T-cell (primary cell): ENCODE measurements at regions of chr10 and their contacts with region 1.

Region 1: DNA sequence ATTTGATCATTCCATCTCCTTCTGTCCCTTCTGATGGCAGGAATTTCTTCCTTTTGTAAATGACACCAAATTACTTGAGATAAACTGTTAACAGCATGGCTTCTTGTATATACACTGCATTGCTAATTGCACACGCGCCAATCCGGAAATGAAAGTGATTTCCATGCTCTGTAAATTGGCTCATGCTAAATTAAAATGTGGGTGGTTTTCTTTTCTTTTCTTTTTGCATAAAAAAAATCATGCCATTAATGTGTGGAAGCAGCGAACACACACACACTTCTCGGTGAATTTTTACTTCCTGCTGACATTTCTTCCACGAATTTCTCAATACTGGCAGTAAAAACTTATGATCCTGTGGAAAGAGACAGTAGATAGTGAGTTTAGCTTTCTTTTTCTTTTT is 123.1 kb upstream of the CCDC6 start:
- DNase-seq: no peak
- ATAC-seq: no peak
- H3K4me3 ChIP-seq: no peak overlapping the region
- H3K4me3 Mint-ChIP-seq: no peak overlapping the region
- H3K27ac ChIP-seq: no peak overlapping the region
- H3K27ac Mint-ChIP-seq: no peak overlapping the region
- H3K4me1 ChIP-seq: no peaks in the 10 kb centered on the region
- H3K4me1 Mint-ChIP-seq: no peaks in the 10 kb centered on the region
- H3K27me3 ChIP-seq: no peaks in the 10 kb centered on the region
- H3K27me3 Mint-ChIP-seq: no peaks in the 10 kb centered on the region

Region 2: GRCh38 chr10:59808896-59809643 is 220.4 kb before region 1 on chr10:
- CTCF ChIA-PET with region 1: no interaction called
- POLR2A ChIA-PET with region 1: interaction called in 1 of 2 experiments, 19 read pairs
- DNase-seq: peak in 34 of 35 experiments; percentile 6 to 57 (median 36)
- ATAC-seq: peak in 3 of 4 experiments; percentile 43 to 63 (median 53)
- H3K4me3 ChIP-seq: no peak overlapping the region
- H3K4me3 Mint-ChIP-seq: no peak overlapping the region
- H3K27ac ChIP-seq: no peak overlapping the region
- H3K27ac Mint-ChIP-seq: no peak overlapping the region
- H3K4me1 ChIP-seq: no peaks in the 10 kb centered on the region
- H3K4me1 Mint-ChIP-seq: no peaks in the 10 kb centered on the region
- H3K27me3 ChIP-seq: no peaks in the 10 kb centered on the region
- H3K27me3 Mint-ChIP-seq: no peaks in the 10 kb centered on the region

Region 3: DNA sequence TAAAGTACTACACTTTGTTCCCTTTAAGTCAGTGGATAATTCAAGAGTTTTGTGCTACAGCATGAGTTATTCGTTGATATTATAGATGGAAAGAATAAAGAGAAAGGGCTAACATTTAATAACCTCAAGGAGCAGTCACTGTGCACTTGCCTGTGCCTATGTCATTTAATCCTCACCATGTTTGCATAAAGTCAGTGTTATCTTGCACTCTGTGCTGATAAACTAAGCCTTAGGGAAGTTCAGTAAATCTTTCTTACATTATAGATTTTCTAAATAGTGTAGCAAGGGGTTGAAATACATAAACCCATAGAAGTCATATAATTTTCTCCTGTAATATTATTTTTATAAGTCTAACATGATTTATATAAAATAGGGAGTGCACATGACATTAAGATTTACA is 1320.6 kb after region 1 on chr10:
- CTCF ChIA-PET with region 1: no interaction called
- POLR2A ChIA-PET with region 1: interaction called in 1 of 2 experiments, 10 read pairs
- DNase-seq: no peak
- ATAC-seq: no peak
- H3K4me3 ChIP-seq: no peak overlapping the region
- H3K4me3 Mint-ChIP-seq: no peak overlapping the region
- H3K27ac ChIP-seq: no peak overlapping the region
- H3K27ac Mint-ChIP-seq: no peak overlapping the region
- H3K4me1 ChIP-seq: no peaks in the 10 kb centered on the region
- H3K4me1 Mint-ChIP-seq: no peaks in the 10 kb centered on the region
- H3K27me3 ChIP-seq: peaks cover 0 to under 1% of the 10 kb centered on the region in 2 experiments
- H3K27me3 Mint-ChIP-seq: peaks cover 3 to 7% of the 10 kb centered on the region in 2 donors